Body of pancreas (tissue), 4 donors: ENCODE measurements at regions of chr10 and their contacts with region 1.

Region 1: GRCh38 chr10:14191871-14192270 is 138.9 kb downstream of the FRMD4A start:
- DNase-seq: no peak
- ATAC-seq: no peak
- H3K4me3 ChIP-seq: no peak overlapping the region
- H3K27ac ChIP-seq: no peak overlapping the region
- H3K4me1 ChIP-seq: peaks cover 7% of the 10 kb centered on the region
- H3K27me3 ChIP-seq: no peaks in the 10 kb centered on the region
- CTCF ChIP-seq: no peak
- POLR2A ChIP-seq: no peak

Region 2: GRCh38 chr10:14325325-14325955 is 133.6 kb after region 1 on chr10:
- intact Hi-C with region 1: no loop called
- DNase-seq: peak; percentile 44 to 79 (median 72)
- ATAC-seq: no peak
- H3K4me3 ChIP-seq: no peak overlapping the region
- H3K27ac ChIP-seq: no peak overlapping the region
- H3K4me1 ChIP-seq: no peaks in the 10 kb centered on the region
- H3K27me3 ChIP-seq: no peaks in the 10 kb centered on the region
- CTCF ChIP-seq: peak; percentile 8 to 60 (median 40)
- POLR2A ChIP-seq: no peak

Region 3: DNA sequence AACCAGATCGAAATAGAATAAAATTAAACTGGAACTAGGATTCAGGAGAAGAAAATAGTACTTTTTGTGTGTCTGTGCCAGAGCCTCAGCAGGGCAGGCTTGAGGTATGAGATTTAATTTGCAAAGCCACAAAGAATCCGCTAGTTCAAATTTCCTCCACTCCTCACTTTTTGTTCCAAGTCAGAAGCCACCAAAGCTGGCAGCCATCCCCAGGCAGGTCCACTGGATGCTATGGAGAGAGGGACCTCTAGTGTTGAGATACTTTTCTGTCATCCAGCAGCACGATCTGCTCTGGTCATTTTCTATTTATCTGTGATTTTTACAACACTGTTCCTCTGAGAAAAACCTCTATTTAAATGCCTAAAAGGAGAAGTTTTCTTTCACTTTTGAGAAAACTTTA is 286.7 kb after region 1 on chr10:
- intact Hi-C with region 1: loop called (anchors 5 kb)
- DNase-seq: peak; percentile 83 to 92 (median 88)
- ATAC-seq: peak; percentile 93
- H3K4me3 ChIP-seq: no peak overlapping the region
- H3K27ac ChIP-seq: peak overlapping the region in 3 of 4 donors; percentile 27 to 69 (median 53)
- H3K4me1 ChIP-seq: peaks cover 14% of the 10 kb centered on the region
- H3K27me3 ChIP-seq: no peaks in the 10 kb centered on the region
- CTCF ChIP-seq: peak; percentile 63 to 93 (median 89)
- POLR2A ChIP-seq: no peak